HepG2 (cell line): ENCODE measurements at regions of chr2 and their contacts with region 1.

Region 1: DNA sequence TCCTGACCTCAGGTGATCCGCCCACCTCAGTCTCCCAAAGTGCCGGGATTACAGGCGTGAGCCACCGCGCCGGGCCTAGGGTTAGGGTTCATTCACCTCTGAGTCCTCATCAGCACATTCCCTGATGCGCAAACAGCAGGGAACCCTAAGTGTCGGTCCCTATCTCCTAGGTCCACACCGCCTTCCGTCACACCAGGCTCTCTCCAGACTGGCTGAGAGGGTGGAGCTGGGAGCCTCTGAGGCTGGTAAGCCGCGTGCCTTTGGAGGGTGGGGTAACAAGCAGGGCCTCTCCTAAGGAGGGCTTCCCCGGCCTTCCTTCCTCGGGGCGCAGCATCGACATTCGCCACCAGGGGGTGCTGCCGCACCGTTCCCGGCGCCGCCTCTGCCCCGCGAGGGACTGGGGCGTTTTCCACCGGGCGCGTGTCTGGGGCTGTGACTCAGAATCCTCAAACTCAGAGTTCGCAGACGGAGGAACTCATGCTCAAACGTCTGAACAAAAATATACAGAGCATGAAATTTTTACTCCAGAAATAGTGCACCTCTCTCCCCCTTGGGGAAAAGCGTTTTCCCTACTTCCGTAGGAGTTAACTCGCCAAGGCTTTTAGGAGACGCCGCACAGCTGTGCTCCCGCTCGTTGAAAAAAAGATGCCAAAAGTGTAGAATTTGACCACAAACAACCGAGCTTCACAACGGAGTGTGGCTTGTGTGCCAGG is 63.9 kb upstream of the ASAP2 start:
- DNase-seq: peak; percentile 55
- ATAC-seq: peak; percentile 88
- H3K4me3 ChIP-seq: peak overlapping the region; percentile 57 to 73 (median 61)
- H3K27ac ChIP-seq: no peak overlapping the region
- H3K4me1 ChIP-seq: peaks cover 43% of the 10 kb centered on the region
- H3K27me3 ChIP-seq: peaks cover 3 to 29% of the 10 kb centered on the region in 2 experiments; a peak in 3 of 5 replicates
- CTCF ChIP-seq: peak; percentile 100
- EP300 ChIP-seq: 0 out of 4 replicates have a peak, but pooled peaks of 1 of the 2 experiments have one; percentile 23
- POLR2A ChIP-seq: no peak
- RAD21 ChIP-seq: peak; percentile 99

Region 2: DNA sequence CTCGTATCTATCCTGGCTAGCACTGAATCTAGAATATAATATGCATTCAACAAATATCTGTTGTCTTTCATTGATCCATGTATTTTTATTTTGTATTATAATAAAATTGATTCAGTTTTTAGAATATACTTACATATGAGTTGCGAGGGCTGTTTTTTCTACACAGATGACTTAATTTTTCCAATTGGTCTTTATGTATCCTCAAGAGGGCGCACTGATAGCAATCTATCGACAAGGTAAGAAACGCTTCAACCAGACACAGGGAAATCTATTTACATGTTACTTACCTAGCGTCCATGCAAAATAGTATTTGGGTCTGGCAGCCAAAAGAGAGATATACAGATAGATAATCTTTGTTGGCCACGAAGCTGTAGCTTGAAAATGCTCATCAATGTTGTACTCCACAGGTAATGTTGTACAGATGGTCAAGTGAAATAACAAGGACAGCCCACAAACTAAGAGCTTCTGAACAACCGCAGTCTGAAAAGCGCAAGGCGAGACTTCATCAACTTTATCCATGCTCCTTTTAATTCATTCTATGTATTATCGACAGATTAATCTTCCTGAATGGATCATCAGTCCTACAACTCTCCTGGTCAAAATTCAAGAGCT is 269.8 kb before region 1 on chr2:
- CTCF ChIA-PET with region 1: interaction called, 7 read pairs
- POLR2A ChIA-PET with region 1: no interaction called
- in situ Hi-C with region 1: loop called (anchors 5 kb)
- intact Hi-C with region 1: loop called (anchors 1 kb)
- DNase-seq: peak; percentile 61
- ATAC-seq: peak; percentile 56
- H3K4me3 ChIP-seq: no peak overlapping the region
- H3K27ac ChIP-seq: no peak overlapping the region
- H3K4me1 ChIP-seq: no peaks in the 10 kb centered on the region
- H3K27me3 ChIP-seq: peaks cover 1 to 4% of the 10 kb centered on the region in 2 experiments; a peak in 1 of 5 replicates
- CTCF ChIP-seq: peak; percentile 69
- EP300 ChIP-seq: no peak
- POLR2A ChIP-seq: no peak
- RAD21 ChIP-seq: no peak

Region 3: GRCh38 chr2:9333591-9334171 is 191.0 kb after region 1 on chr2:
- CTCF ChIA-PET with region 1: interaction called, 14 read pairs
- POLR2A ChIA-PET with region 1: interaction called, 5 read pairs
- in situ Hi-C with region 1: loop called (anchors 10 kb)
- intact Hi-C with region 1: loop called (anchors 1 kb)
- DNase-seq: peak; percentile 84
- ATAC-seq: peak; percentile 55
- H3K4me3 ChIP-seq: no peak overlapping the region
- H3K27ac ChIP-seq: no peak overlapping the region
- H3K4me1 ChIP-seq: peaks cover 74% of the 10 kb centered on the region
- H3K27me3 ChIP-seq: no peaks in the 10 kb centered on the region
- CTCF ChIP-seq: peak; percentile 90
- EP300 ChIP-seq: no peak; a peak in 1 of 4 replicates
- POLR2A ChIP-seq: no peak
- RAD21 ChIP-seq: peak; percentile 88

Region 4: GRCh38 chr2:9378433-9379390 is 236.0 kb after region 1 on chr2:
- CTCF ChIA-PET with region 1: no interaction called
- POLR2A ChIA-PET with region 1: no interaction called
- in situ Hi-C with region 1: loop called (anchors 10 kb)
- intact Hi-C with region 1: no loop called
- DNase-seq: no peak
- ATAC-seq: peak; percentile 29; the same call in 1 of the 3 replicates
- H3K4me3 ChIP-seq: no peak overlapping the region
- H3K27ac ChIP-seq: no peak overlapping the region
- H3K4me1 ChIP-seq: peaks cover 46% of the 10 kb centered on the region
- H3K27me3 ChIP-seq: no peaks in the 10 kb centered on the region
- CTCF ChIP-seq: no peak
- EP300 ChIP-seq: no peak
- POLR2A ChIP-seq: no peak
- RAD21 ChIP-seq: no peak

Region 5: DNA sequence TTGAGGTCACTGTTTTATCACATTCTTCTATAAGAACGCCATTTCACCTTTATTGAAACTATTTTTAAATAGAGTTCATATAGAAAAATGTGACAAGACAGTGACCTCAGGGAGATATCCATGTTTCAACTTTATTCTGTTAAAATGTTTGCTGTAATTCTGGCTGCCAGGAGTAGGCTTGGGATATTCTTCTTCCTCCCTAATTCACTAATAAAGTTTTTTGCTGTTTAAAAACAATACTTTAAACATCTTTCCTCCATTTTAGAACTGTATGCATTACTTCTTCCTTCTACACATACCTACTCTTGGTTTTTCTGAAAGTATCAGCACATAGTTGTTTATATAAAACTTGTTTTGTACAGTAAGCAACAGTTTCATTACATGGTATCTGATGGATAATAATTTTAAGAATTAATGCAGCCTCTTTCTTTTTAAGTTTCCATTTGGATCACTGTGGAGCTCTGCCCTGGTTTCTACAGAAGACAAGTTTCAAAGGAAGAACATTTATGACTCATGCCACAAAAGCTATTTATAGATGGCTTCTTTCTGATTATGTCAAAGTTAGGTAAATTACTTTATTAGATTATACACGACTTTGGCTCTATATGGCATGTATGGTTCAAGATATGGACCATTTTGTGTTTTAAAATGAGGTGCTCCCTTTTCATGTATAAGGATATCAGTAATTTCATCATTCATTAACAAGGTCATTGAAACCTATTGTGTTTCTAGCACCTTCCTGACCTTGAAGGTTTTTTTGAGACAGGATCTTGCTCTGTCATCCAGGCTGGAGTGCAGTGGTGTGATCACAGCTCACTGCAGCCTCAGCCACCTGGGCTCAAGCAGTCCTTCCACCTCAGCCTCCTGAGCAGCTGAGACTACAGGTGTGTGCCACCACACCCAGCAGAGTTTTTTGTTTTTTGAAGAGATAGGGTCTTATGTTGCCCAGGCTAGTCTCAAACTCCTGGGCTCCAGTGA is 287.9 kb after region 1 on chr2:
- CTCF ChIA-PET with region 1: interaction called, 4 read pairs
- POLR2A ChIA-PET with region 1: no interaction called
- in situ Hi-C with region 1: loop called (anchors 10 kb)
- intact Hi-C with region 1: no loop called
- DNase-seq: no peak
- ATAC-seq: no peak
- H3K4me3 ChIP-seq: no peak overlapping the region
- H3K27ac ChIP-seq: no peak overlapping the region
- H3K4me1 ChIP-seq: peaks cover 3% of the 10 kb centered on the region; the same call in 1 of the 2 replicates
- H3K27me3 ChIP-seq: no peaks in the 10 kb centered on the region
- CTCF ChIP-seq: no peak
- EP300 ChIP-seq: no peak
- POLR2A ChIP-seq: no peak
- RAD21 ChIP-seq: no peak

Region 6: GRCh38 chr2:9918275-9918674 is 775.6 kb after region 1 on chr2:
- CTCF ChIA-PET with region 1: no interaction called
- POLR2A ChIA-PET with region 1: no interaction called
- in situ Hi-C with region 1: no loop called
- intact Hi-C with region 1: no loop called
- DNase-seq: no peak
- ATAC-seq: no peak
- H3K4me3 ChIP-seq: no peak overlapping the region
- H3K27ac ChIP-seq: no peak overlapping the region
- H3K4me1 ChIP-seq: no peaks in the 10 kb centered on the region
- H3K27me3 ChIP-seq: no peaks in the 10 kb centered on the region
- CTCF ChIP-seq: no peak
- EP300 ChIP-seq: no peak
- POLR2A ChIP-seq: no peak
- RAD21 ChIP-seq: no peak

Region 7: DNA sequence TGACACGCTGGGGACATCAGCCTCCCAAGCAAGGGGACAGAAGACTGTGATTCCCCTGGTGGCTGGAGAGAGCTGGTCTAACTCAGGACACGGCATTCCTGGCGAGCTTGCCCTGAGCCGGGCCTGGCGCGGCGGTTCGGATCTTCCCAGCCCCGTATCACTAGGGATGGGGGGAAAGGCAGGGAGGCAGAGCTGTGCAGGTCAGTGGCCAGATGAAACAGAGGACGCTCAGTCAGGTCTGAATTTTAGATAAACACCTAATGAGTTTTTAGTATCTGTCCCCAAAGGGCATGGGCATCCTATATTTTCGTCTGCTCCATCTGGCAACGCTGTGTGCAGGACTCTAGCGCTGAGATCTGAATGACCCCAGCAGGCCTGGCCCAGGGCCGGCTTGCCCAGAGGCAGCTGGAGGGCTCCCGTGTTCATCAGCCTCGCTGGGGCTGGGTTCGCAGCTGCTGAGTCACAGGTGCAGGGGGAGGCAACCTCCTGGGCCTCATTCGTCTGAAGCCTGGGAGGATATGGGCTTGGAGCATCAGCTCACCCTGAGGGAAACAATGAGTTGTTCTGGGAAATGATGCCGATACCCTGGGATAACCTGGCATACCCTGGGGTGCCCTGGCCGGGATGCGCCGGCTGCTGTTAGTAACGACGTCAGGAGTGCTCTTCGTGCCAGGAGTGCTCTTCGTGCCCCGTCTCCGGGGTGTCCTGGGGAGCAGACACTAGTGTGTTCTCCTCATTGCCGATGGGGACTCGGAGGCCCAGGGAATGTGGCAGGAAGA is 1111.9 kb after region 1 on chr2:
- CTCF ChIA-PET with region 1: no interaction called
- POLR2A ChIA-PET with region 1: no interaction called
- in situ Hi-C with region 1: no loop called
- intact Hi-C with region 1: no loop called
- DNase-seq: no peak
- ATAC-seq: peak; percentile 52
- H3K4me3 ChIP-seq: no peak overlapping the region; a peak in 1 of 6 replicates
- H3K27ac ChIP-seq: no peak overlapping the region
- H3K4me1 ChIP-seq: peaks cover 18% of the 10 kb centered on the region
- H3K27me3 ChIP-seq: peaks cover 28 to 62% of the 10 kb centered on the region in 2 experiments
- CTCF ChIP-seq: no peak
- EP300 ChIP-seq: no peak
- POLR2A ChIP-seq: no peak
- RAD21 ChIP-seq: no peak